Activated T-helper 1 cell treated with anti-CD3 and anti-CD28 coated beads, Interleukin-12 subunit alpha, Interleukin-12 subunit beta, Interleukin-2, Interleukin-4 antibody, amounts not matched to agents 30 ng/mL and 10 ng/mL and 1 ng/mL, durations not matched to agents 14 hours and 24 hours and 36 hours (primary cell): ENCODE measurements at regions of chrX and their contacts with region 1.

Region 1: DNA sequence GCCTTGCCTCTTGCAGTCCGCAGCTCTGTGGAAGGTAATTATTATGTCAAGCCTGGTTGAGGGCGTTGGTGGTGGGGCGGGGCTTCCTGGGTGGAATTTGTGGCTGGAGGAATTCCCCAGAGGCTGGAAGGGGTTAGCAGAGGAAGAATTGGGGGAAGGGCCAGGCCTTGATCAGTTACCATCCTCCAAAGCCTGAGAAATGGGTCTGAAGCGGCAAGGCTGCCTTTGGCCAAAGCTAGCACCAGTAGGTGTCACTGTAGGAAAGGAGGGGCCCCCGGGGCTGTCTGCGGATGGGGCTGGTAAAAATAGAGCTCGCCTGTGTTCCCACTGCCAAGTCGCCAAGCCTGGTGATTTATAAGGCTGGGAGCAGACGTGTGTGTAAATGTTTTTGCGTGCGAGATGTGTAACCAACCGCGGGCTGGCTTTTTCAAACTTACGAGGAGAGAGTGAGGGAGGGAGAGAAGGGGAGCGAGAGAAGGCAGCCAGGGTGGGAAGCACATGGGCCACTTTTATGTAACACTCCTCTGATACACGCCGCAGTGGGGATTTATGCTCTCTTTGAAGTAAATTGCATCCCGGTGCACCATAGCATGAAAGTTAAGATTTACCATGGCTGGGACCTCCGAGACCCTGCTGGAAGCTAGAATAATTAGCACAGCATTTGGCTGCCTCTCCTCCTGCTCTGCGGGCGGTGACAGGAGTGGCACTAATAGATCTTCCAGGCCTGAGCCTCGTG is 366.9 kb downstream of the BCOR start:
- DNase-seq: peak; percentile 31
- H3K4me3 Mint-ChIP-seq: peak overlapping the region; percentile 54
- H3K27ac Mint-ChIP-seq: peak overlapping the region; percentile 84
- H3K4me1 Mint-ChIP-seq: peaks cover 30% of the 10 kb centered on the region
- H3K27me3 Mint-ChIP-seq: no peaks in the 10 kb centered on the region

Region 2: GRCh38 chrX:39777623-39778025 is 46.8 kb after region 1 on chrX:
- intact Hi-C with region 1: loop called (anchors 2 kb)
- DNase-seq: peak; percentile 2
- H3K4me3 Mint-ChIP-seq: peak overlapping the region; percentile 30
- H3K27ac Mint-ChIP-seq: peak overlapping the region; percentile 93
- H3K4me1 Mint-ChIP-seq: peaks cover 45% of the 10 kb centered on the region
- H3K27me3 Mint-ChIP-seq: no peaks in the 10 kb centered on the region